BJ (cell line): ENCODE measurements at regions of chr2 and their contacts with region 1.

Region 1: GRCh38 chr2:222982010-222982908 is 69.7 kb upstream of the KCNE4 start:
- DNase-seq: no peak
- H3K4me3 ChIP-seq: no peak overlapping the region
- H3K27me3 ChIP-seq: no peaks in the 10 kb centered on the region
- CTCF ChIP-seq: peak; percentile 84

Region 2: DNA sequence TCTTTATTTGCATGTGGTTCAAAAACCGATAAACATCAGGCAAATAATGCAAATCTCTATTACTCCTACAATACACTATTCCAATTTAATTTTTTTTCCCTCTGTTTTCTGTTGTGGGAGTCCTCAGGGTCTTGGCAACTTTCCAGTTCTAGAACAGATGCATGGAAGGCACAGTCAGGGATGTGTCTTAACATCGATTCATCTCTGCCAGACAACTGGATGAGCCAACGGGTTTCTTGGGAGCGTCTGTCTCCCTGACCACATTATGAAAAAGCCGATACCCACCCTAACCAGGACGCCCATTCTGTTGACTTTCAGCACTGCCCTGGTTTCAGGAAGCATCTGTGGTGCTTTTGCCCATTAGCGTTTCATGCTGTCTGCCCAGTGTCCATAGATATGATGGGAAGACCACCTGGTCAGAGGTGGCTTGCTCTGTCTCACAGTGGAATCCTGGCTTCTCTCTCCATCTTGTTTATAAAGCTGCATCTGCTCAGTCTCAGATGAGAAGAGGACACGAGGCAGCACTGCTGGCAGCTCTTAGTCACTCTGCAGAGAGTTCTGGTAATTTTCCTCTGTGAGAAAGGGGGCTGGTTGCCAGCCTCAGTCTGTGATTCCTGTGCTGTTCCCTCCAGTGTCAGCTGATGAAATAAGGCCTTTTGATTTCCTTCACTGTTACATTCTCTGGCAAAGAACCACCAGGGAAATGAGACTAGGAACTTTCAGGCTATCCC is 11.8 kb after region 1 on chr2:
- CTCF ChIA-PET with region 1: interaction called, 23 read pairs
- POLR2A ChIA-PET with region 1: no interaction called
- DNase-seq: peak; percentile 94
- H3K4me3 ChIP-seq: no peak overlapping the region
- H3K27me3 ChIP-seq: no peaks in the 10 kb centered on the region
- CTCF ChIP-seq: 0 out of 2 replicates have a peak, but pooled peaks have one; percentile 2

Region 3: GRCh38 chr2:223054193-223054781 is 72.0 kb after region 1 on chr2:
- CTCF ChIA-PET with region 1: interaction called, 13 read pairs
- POLR2A ChIA-PET with region 1: interaction called, 3 read pairs
- DNase-seq: peak; percentile 82
- H3K4me3 ChIP-seq: peak overlapping the region; percentile 42
- H3K27me3 ChIP-seq: no peaks in the 10 kb centered on the region
- CTCF ChIP-seq: no peak

Region 4: GRCh38 chr2:223101340-223102039 is 119.2 kb after region 1 on chr2:
- CTCF ChIA-PET with region 1: interaction called, 32 read pairs
- POLR2A ChIA-PET with region 1: no interaction called
- DNase-seq: no peak
- H3K4me3 ChIP-seq: no peak overlapping the region
- H3K27me3 ChIP-seq: no peaks in the 10 kb centered on the region
- CTCF ChIP-seq: peak; percentile 55